Right ventricle myocardium superior (tissue), 1 donor: ENCODE measurements at regions of chr6 and their contacts with region 1.

Region 1: GRCh38 chr6:143427109-143427817 is 23.2 kb downstream of the ADAT2 start:
- DNase-seq: peak; percentile 78
- ATAC-seq: peak; percentile 96

Region 2: GRCh38 chr6:142474531-142475289 is 952.6 kb before region 1 on chr6:
- intact Hi-C with region 1: loop called (anchors 10 kb)
- DNase-seq: no peak
- ATAC-seq: no peak

Region 3: GRCh38 chr6:142686507-142686887 is 740.8 kb before region 1 on chr6:
- intact Hi-C with region 1: loop called (anchors 5 kb)
- DNase-seq: no peak
- ATAC-seq: no peak

Region 4: GRCh38 chr6:143232849-143233248 is 194.4 kb before region 1 on chr6:
- intact Hi-C with region 1: no loop called
- DNase-seq: peak; percentile 47
- ATAC-seq: peak; percentile 31